ENCODE measurements at regions of chr7 and their contacts with region 1.

Region 1: DNA sequence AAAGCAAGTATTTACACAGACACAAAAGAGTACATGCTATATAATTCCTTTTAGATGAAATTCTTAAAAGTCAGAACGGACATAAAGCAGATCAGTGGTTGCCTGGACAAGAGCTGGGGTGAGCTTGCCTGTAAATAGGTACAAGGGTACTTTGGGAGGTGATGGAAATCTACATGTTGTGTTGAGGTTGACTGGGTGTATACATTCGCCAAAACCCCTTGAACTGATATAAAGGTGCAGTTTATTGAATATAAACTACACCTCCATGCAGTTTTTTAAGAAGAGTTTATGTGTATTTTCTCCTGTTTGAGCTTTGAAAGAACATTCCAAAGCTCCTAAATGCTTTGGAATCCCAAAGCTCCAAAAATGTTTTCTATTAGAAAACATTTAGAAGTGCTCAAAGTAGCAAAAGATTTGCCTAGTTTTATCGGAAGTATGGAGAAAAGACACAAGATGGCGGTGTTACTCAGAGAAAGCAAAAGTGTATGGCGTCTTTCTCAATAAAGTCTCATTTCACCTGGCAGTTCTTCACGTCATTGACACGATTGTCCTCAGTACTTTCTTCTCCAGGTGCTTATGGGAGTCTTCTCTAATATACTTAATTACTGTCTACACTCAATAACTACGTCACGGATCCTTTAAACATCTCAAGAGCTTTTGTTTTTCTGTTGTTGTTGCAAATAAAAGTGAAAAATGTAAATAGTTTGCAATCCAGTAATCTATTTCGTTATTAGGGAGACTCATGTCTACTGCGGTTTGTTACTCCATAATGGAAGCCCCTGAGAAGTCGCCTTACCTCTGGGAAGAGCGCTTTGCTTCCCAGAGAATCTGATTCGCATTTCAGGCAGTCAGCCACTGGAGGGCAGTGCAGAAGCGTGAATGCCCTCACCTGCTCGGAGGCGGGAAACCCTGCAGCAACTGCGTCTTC is 14.7 kb upstream of the SEC61G start:
- H3K4me3 ChIP-seq: peak overlapping the region; percentile 6; the same call in 1 of the 2 replicates
- H3K27ac ChIP-seq: no peak overlapping the region
- H3K4me1 ChIP-seq: no peaks in the 10 kb centered on the region
- CTCF ChIP-seq: peak; percentile 42; the same call in 1 of the 2 replicates

Region 2: DNA sequence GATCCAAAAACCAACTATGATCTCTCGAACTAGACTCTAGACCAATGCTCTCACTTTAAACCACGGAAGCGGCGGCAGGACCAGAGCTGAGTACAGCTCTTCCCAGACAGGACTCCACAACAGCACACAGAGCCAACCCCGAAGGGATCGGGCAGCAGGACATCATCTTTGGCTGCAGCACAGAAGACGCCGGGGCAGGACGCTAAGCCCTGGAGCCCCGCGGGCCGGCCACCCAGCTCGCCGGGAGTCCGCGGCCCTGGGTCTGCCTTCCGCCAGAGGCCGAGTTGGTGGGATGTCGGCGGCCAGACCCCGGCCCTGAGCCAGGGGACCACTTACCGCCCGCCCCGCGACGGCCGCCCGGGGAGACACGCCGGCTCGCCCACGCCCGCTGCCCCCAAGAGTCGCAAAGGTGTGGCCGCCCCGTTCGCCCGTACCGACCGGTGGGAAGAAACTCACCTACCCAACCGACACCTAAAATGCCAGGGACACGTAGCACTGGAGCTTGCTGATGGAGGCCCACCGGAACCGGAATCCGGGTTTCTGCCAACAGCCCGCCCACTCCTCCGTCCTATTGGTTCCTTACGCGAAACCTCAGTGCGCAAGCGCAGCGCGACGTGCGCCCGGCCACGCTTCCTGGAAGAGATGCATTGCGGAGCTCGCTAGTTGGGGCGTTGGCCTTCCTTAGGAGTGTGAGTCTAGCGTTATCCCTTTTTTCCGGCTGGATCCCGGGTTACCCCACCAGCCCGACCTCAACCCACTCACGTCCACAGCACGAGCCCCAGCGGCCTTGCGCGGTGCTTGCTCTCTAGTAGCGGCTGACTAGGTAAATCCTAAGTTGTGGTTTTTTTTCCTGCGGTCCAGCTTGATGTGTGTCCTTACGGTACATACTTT is 14.8 kb before region 1 on chr7 and contains the start of gene SEC61G:
- CTCF ChIA-PET with region 1: interaction called, 21 read pairs
- POLR2A ChIA-PET with region 1: interaction called, 5 read pairs
- H3K4me3 ChIP-seq: peak within 1 kb of the TSS; percentile 98
- H3K27ac ChIP-seq: peak within 1 kb of the TSS; percentile 76
- H3K4me1 ChIP-seq: peaks cover 4% of the 10 kb centered on the region; the same call in 1 of the 2 replicates
- CTCF ChIP-seq: no peak

Region 3: DNA sequence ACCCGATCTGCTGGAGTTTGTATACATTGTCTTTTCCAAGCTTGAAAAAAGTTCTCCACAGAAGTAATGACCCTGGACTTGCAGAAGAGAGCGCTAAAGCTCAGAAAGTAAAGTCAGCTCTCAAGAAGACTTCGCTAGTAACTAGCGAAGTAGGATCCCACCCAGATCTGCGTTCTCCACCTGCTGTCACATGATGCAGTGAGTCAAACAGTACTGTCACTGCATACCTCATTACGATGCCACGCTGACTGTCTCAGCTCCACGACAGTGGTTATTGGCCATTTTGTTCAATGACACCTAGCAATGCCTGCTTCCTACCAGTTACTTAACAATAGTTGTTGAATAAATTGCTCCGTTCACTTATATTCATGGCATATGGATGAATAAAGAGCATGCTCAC is 14.9 kb after region 1 on chr7:
- CTCF ChIA-PET with region 1: interaction called, 39 read pairs
- POLR2A ChIA-PET with region 1: no interaction called
- H3K4me3 ChIP-seq: no peak overlapping the region
- H3K27ac ChIP-seq: no peak overlapping the region
- H3K4me1 ChIP-seq: no peaks in the 10 kb centered on the region
- CTCF ChIP-seq: peak; percentile 30; the same call in 1 of the 2 replicates

Region 4: GRCh38 chr7:54839538-54840213 is 65.9 kb after region 1 on chr7:
- CTCF ChIA-PET with region 1: interaction called, 22 read pairs
- POLR2A ChIA-PET with region 1: no interaction called
- H3K4me3 ChIP-seq: no peak overlapping the region
- H3K27ac ChIP-seq: no peak overlapping the region
- H3K4me1 ChIP-seq: no peaks in the 10 kb centered on the region
- CTCF ChIP-seq: peak; percentile 45

Region 5: GRCh38 chr7:55237156-55237893 is 463.6 kb after region 1 on chr7:
- CTCF ChIA-PET with region 1: no interaction called
- POLR2A ChIA-PET with region 1: no interaction called
- H3K4me3 ChIP-seq: no peak overlapping the region
- H3K27ac ChIP-seq: no peak overlapping the region
- H3K4me1 ChIP-seq: no peaks in the 10 kb centered on the region
- CTCF ChIP-seq: no peak

Region 6: GRCh38 chr7:55265836-55266642 is 492.3 kb after region 1 on chr7:
- CTCF ChIA-PET with region 1: interaction called, 13 read pairs
- POLR2A ChIA-PET with region 1: no interaction called
- H3K4me3 ChIP-seq: no peak overlapping the region
- H3K27ac ChIP-seq: no peak overlapping the region
- H3K4me1 ChIP-seq: no peaks in the 10 kb centered on the region
- CTCF ChIP-seq: no peak